Mammary epithelial cell (primary cell): ENCODE measurements at regions of chr1 and their contacts with region 1.

Region 1: DNA sequence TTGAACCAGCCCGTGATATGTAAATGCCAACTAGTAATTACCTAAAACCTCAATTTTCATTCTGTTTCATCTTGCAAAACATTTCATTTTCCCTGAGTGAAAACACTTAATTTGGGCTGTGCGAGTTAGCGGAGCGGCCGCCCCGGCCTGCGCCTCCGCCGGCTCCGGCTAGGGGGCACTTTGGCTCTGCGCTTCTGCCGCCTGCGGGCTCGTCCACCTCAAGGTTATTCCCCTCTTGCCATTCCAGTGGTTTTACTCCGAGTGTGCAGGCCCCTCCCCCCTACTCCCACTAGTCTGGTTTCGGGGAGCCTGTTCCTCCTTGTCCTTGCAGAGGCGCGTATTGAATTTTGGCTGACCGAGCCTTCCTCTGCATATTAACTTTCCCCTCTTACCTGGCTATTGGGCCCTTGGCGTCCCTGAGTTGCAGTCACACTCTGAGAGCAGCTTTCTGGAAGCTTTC is 55.6 kb downstream of the PEX14 start:
- DNase-seq: peak; percentile 73
- H3K4me3 ChIP-seq: peak overlapping the region; percentile 3 to 20 (median 6)
- H3K27ac ChIP-seq: peak overlapping the region; percentile 80
- H3K4me1 ChIP-seq: peaks cover 46% of the 10 kb centered on the region
- H3K27me3 ChIP-seq: no peaks in the 10 kb centered on the region
- CTCF ChIP-seq: peak; percentile 80 to 95

Region 2: GRCh38 chr1:10415211-10415930 is 114.9 kb before region 1 on chr1:
- CTCF ChIA-PET with region 1: no interaction called
- dilution Hi-C with region 1: no loop called
- in situ Hi-C with region 1: no loop called
- intact Hi-C with region 1: no loop called
- DNase-seq: no peak
- H3K4me3 ChIP-seq: no peak overlapping the region
- H3K27ac ChIP-seq: no peak overlapping the region
- H3K4me1 ChIP-seq: no peaks in the 10 kb centered on the region
- H3K27me3 ChIP-seq: no peaks in the 10 kb centered on the region
- CTCF ChIP-seq: no peak

Region 3: DNA sequence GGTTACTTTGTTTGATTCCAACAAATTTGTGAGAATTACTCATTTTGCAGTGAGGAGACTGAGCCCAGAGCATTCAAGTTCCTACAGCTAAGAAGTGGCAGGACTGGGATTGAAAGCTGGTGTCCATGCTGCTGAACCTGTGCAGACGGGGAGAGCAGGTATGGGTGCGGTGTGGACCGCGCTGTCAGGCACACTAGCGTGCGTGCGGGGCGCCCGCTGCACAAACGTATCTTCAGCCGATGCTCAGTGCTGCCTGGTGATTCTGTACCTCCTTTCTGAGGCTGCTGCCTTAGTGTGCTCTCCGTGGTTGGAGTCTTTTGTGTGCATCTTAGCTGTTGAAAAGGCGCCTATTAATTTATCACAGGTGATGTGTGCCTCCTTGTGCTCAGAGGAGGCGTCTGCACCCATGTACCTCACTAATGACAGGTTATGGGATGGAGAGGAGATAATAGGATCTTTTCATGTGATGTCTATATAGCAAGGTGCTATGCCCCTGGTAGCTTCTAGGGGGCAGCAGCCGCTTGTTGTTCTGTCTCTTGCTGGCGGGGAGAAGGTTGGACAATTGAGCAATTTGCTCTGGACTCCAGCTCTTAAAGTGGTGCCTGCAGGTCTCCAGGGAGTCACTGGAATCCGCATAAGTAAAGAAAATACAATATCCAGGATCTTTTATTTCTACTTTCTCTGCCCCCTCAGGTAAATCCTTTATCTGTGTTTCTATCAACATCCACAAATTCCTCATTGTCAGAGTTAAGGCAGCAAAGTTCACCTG is 23.0 kb before region 1 on chr1:
- CTCF ChIA-PET with region 1: interaction called, 5 read pairs
- dilution Hi-C with region 1: no loop called
- in situ Hi-C with region 1: no loop called
- intact Hi-C with region 1: loop called (anchors 1 kb)
- DNase-seq: peak; percentile 72
- H3K4me3 ChIP-seq: no peak overlapping the region
- H3K27ac ChIP-seq: no peak overlapping the region
- H3K4me1 ChIP-seq: peaks cover 25% of the 10 kb centered on the region
- H3K27me3 ChIP-seq: no peaks in the 10 kb centered on the region
- CTCF ChIP-seq: peak; percentile 92 to 97

Region 4: DNA sequence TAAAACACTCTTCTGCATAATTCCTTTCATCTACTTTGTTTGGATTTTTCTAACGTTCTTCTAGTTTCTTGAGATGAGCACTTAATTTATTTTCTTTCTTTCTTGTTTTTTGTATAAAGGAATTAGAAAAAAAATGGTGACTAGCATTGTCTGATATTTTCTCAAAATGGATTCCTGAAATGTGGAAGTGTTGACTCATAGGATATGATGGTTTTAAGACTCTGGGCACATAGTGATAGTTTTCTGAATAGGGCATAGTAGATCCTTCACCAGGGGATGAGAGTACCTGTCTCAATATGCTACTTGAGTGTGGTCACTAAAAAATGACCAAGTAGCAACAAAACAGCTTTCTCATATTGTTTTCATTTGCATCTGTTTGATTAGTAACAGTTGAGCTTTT is 45.3 kb after region 1 on chr1:
- CTCF ChIA-PET with region 1: no interaction called
- dilution Hi-C with region 1: loop called (anchors 5 kb)
- in situ Hi-C with region 1: no loop called
- intact Hi-C with region 1: no loop called
- DNase-seq: peak; percentile 40
- H3K4me3 ChIP-seq: no peak overlapping the region
- H3K27ac ChIP-seq: peak overlapping the region; percentile 44
- H3K4me1 ChIP-seq: peaks cover 5% of the 10 kb centered on the region
- H3K27me3 ChIP-seq: no peaks in the 10 kb centered on the region
- CTCF ChIP-seq: no peak

Region 5: GRCh38 chr1:10635085-10635896 is 105.0 kb after region 1 on chr1:
- CTCF ChIA-PET with region 1: no interaction called
- dilution Hi-C with region 1: no loop called
- in situ Hi-C with region 1: no loop called
- intact Hi-C with region 1: loop called (anchors 1 kb)
- DNase-seq: peak; percentile 94
- H3K4me3 ChIP-seq: peak overlapping the region; percentile 4 to 39 (median 22)
- H3K27ac ChIP-seq: peak overlapping the region; percentile 94
- H3K4me1 ChIP-seq: peaks cover 43% of the 10 kb centered on the region
- H3K27me3 ChIP-seq: no peaks in the 10 kb centered on the region
- CTCF ChIP-seq: no peak

Region 6: GRCh38 chr1:10796019-10796944 is 266.0 kb after region 1 on chr1 and contains the start of gene CASZ1:
- CTCF ChIA-PET with region 1: no interaction called
- dilution Hi-C with region 1: no loop called
- in situ Hi-C with region 1: no loop called
- intact Hi-C with region 1: loop called (anchors 1 kb)
- DNase-seq: peak; percentile 92
- H3K4me3 ChIP-seq: peak within 1 kb of the TSS; percentile 64 to 87 (median 80)
- H3K27ac ChIP-seq: no peak within 1 kb of the TSS
- H3K4me1 ChIP-seq: peaks cover 10% of the 10 kb centered on the region
- H3K27me3 ChIP-seq: no peaks in the 10 kb centered on the region
- CTCF ChIP-seq: no peak
- total RNA-seq, gene CASZ1: 13.0 to 14.1 TPM